ENCODE measurements at regions of chr19 and their contacts with region 1.

Region 1: DNA sequence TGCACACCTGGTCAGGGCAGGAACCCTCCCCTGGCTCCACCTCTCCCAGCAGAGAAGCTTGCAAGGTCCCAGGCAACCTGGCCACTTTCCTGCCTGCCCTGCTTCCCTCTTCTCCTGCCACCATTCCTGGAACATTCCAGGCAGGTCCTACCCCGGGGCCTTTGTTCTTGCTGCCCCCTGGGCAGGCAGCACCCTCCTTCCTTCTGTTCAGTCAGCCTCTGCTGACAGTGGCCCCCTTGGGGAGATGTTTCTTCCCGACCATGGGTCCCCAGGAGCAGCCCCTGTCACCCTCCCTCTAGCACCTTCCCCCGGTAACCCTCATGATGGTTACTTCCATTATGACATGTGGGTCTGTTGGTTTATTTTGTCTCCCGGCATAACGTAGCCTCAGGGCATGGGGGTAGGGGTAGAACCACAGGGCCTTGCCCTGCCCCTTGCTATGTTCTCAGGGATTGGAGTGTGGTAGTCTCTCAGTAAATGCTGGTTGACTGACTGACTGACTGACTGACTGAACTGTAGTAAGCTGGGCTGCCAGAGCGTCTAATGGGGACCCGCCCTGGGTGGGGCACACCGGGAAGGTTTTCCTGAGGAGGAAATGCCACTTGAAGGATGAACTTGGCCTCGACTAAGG is 10.8 kb downstream of the PAK4 start:
- DNase-seq: no peak
- H3K4me3 ChIP-seq: no peak overlapping the region
- H3K27ac ChIP-seq: no peak overlapping the region
- H3K4me1 ChIP-seq: no peaks in the 10 kb centered on the region
- H3K27me3 ChIP-seq: no peaks in the 10 kb centered on the region
- CTCF ChIP-seq: no peak

Region 2: DNA sequence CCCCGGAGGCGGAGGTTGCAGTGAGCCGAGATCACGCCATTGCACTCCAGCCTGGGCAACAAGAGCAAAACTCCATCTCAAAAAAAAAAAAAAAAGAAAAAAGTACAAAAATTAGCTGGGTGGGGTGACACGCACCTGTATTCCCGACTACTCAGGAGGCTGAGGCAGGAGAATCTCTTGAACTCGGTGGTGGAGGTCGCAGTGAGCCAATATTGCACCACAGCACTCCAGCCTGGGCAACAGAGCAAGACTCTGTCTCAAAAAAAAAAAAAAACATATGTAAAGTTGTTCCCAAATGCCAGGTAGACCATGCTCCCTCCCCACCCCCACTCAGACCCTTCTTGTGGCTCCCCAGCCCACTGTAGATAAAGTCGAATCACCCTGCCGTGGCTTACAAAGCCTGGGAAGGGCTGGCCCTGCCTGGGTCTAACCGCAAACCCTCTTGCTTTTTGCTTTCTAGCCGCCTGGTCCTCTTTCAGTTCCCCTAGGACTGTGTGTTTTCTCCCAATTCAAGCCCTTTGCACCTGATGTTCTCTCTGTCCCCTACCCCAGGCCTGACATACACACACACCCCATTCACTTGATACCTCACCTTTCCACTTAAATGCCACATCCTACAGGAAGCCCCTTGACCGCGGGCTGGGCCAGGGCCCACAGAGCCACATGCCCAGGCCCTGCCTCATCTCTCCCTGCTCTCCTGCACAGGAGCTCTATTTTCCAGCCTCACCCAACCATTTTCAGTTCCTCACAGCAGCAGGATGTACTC is 553.0 kb before region 1 on chr19:
- CTCF ChIA-PET with region 1: no interaction called
- POLR2A ChIA-PET with region 1: no interaction called
- intact Hi-C with region 1: no loop called
- DNase-seq: no peak
- H3K4me3 ChIP-seq: no peak overlapping the region
- H3K27ac ChIP-seq: no peak overlapping the region
- H3K4me1 ChIP-seq: no peaks in the 10 kb centered on the region
- H3K27me3 ChIP-seq: no peaks in the 10 kb centered on the region
- CTCF ChIP-seq: no peak

Region 3: DNA sequence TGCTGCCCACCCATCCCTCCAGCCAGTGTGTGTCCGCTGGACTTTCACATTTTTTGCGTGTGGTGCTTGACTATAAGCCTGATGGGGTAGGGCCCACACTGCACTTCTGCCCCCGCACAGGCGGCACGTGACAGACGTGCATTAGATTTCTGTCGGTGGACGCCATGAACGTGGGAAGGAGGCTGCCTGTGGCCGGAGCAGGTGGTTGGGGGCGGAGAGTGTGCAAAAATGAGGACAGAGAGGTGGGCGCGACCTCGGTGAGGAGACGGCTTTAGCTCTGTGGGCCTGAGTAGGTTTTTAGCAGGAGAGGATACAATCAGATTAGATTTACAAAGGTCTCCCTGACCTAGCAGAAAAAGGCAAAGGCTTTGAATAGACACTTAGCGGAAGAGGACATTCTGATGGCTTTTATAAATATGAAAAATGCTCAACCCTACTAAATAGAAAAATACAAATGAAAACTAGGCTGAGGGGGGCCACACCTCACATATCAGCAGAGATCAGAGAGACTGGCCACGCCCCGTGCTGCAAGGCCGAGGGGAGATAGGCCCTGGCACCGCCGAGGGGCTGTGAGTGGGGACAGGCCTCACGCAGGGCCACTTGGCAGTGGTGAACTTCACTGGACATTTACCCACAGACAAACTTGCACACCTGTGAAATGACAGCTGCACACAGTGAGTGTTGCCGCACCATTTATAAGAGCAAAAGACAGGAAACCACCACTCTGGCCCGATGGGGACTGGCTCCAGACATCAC is 14.6 kb after region 1 on chr19:
- CTCF ChIA-PET with region 1: no interaction called
- POLR2A ChIA-PET with region 1: no interaction called
- intact Hi-C with region 1: no loop called
- DNase-seq: no peak
- H3K4me3 ChIP-seq: no peak overlapping the region
- H3K27ac ChIP-seq: no peak overlapping the region
- H3K4me1 ChIP-seq: no peaks in the 10 kb centered on the region
- H3K27me3 ChIP-seq: no peaks in the 10 kb centered on the region
- CTCF ChIP-seq: no peak

Region 4: DNA sequence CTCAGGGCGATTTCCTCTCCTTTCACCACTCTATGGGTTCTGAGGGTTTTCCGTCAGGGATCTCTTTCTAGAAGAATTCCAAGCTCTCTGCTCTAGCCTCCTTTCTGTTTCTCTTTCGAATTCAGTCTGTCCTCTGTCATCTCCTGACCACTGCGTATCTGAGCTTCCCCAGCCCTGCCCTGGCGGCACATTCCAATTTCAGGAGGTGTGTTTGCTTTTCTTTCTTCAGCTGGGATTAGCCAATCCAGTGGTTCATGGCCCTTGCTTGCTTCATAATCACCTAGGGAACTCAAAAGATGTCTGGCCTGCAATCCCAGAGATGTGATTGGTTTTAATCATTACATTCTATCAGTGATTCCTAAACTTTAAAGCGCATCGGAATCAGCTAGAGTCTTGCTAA is 141.2 kb after region 1 on chr19:
- CTCF ChIA-PET with region 1: no interaction called
- POLR2A ChIA-PET with region 1: interaction called, 21 read pairs
- intact Hi-C with region 1: no loop called
- DNase-seq: no peak
- H3K4me3 ChIP-seq: no peak overlapping the region
- H3K27ac ChIP-seq: no peak overlapping the region
- H3K4me1 ChIP-seq: no peaks in the 10 kb centered on the region
- H3K27me3 ChIP-seq: peaks cover 4% of the 10 kb centered on the region
- CTCF ChIP-seq: no peak

Measured in A673 (cell line).